ENCODE measurements at regions of chr4 and their contacts with region 1.

Region 1: DNA sequence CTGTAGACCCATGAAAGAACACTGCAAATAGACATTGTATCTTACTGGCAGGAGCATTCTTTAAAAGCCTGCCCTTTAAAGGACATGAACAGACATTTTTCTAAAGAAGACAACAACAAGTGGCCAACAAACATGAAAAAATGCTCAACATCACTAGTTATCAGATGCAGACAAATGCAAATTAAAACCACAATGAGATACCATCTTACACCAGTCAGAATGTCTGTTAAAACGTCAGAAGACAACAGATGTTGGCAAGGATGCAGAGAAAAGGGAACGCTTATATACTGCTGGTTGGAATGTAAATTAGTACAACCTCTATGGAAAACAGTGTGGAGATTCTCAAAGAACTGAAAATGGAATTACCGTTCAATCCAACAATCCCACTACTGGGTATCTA is 77.2 kb downstream of the ATP10D start:
- DNase-seq: no peak
- H3K4me3 Mint-ChIP-seq: no peak overlapping the region
- H3K27ac Mint-ChIP-seq: no peak overlapping the region
- H3K4me1 Mint-ChIP-seq: peaks cover 9% of the 10 kb centered on the region
- H3K27me3 Mint-ChIP-seq: no peaks in the 10 kb centered on the region

Region 2: GRCh38 chr4:47490550-47490949 is 71.7 kb before region 1 on chr4:
- intact Hi-C with region 1: loop called (anchors 2 kb)
- DNase-seq: peak; percentile 60
- H3K4me3 Mint-ChIP-seq: no peak overlapping the region
- H3K27ac Mint-ChIP-seq: no peak overlapping the region
- H3K4me1 Mint-ChIP-seq: peaks cover 11% of the 10 kb centered on the region
- H3K27me3 Mint-ChIP-seq: no peaks in the 10 kb centered on the region

Measured in activated CD4-positive, alpha-beta T cell treated with anti-CD3 and anti-CD28 coated beads, Interleukin-2, amount 10 ng/mL, durations not matched to agents 24 days and 14 days (primary cell).